Vagina (tissue), 2 donors: ENCODE measurements at regions of chr21 and their contacts with region 1.

Region 1: GRCh38 chr21:41816220-41817165 is 49.6 kb upstream of the RIPK4 start:
- DNase-seq: no peak
- H3K4me3 ChIP-seq: no peak overlapping the region
- H3K27ac ChIP-seq: no peak overlapping the region
- H3K4me1 ChIP-seq: no peaks in the 10 kb centered on the region
- H3K27me3 ChIP-seq: no peaks in the 10 kb centered on the region
- CTCF ChIP-seq: peak; percentile 66 to 72 (median 69)
- POLR2A ChIP-seq: no peak

Region 2: DNA sequence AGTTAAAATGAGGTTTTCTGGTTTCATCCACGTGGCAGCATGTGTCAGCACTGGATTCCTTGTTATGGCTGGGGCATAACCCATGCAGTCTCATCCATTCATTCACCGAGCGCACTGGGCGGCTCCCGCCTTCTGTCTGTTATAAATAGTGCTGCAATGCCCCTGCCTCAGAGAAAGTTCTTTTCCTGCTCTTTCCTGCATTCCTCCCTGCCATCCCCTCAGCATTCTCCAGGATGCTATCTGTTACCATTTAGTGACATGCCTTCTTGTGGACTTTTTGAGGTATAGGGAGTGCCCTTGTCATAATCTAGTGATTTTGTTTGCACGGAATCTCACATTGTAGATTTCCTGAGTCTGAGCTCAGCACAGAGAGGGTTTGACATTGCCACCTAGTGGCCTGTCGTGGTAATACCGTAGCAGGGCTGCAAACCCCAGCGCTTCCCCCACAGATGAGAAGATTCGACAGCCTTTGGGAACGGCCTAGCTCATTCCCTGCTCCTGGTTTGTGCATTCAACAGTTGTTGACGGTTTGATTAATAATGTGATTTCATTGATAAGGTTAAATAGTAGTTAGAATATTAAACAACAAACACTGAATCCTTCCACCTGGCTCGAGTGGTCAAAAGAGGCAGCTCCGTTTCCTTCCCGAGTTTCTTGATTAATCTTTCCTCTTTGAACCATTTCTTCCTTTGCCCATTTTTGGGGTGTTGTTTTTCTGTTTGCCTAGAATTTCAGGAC is 300.9 kb after region 1 on chr21:
- intact Hi-C with region 1: loop called (anchors 2 kb)
- DNase-seq: no peak
- H3K4me3 ChIP-seq: no peak overlapping the region
- H3K27ac ChIP-seq: peak overlapping the region; percentile 21
- H3K4me1 ChIP-seq: peaks cover 18% of the 10 kb centered on the region
- H3K27me3 ChIP-seq: no peaks in the 10 kb centered on the region
- CTCF ChIP-seq: peak; percentile 78 to 96 (median 93)
- POLR2A ChIP-seq: no peak